PC-9 (cell line): ENCODE measurements at regions of chr11 and their contacts with region 1.

Region 1: DNA sequence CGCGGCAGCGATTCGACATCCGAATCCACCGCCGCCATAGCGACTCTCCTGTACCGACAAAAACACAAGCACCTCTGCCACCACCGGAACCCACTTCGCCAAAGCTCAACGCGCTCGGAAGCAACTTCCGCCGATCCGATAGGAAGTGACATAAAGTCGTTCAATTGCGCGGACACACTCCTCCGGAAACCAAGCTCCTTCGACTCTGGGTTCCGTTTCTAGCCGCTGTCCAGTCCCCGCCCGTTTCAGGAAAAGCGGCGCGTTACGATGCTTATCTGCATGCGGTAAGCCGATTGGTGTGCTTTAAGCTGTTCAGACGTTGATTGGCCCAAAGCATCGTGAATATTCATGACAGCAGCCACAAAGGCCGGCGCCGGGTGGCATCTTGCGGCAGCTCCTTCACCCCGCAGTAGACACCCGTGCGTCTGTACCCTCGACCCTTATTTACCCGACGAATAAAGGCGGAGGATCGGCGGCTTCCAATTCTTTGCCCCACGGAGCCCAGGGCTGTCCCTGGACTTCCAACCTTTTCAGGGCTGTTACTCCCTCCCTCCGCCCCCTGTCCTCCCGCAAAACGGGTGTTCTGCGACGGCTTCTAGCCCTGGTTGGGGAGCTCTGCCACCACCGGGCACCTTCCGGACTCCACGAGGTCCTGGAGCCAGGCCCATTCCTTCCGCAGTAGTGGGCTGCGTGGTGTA is at the start of gene TUT1:
- DNase-seq: peak; percentile 98 to 100
- H3K4me3 ChIP-seq: peak within 1 kb of the TSS; percentile 84
- H3K27ac ChIP-seq: peak within 1 kb of the TSS; percentile 61
- H3K4me1 ChIP-seq: peaks cover 29% of the 10 kb centered on the region
- H3K27me3 ChIP-seq: no peaks in the 10 kb centered on the region
- CTCF ChIP-seq: no peak
- total RNA-seq, gene TUT1: 39.3 and 40.5 TPM in 2 replicates

Region 2: DNA sequence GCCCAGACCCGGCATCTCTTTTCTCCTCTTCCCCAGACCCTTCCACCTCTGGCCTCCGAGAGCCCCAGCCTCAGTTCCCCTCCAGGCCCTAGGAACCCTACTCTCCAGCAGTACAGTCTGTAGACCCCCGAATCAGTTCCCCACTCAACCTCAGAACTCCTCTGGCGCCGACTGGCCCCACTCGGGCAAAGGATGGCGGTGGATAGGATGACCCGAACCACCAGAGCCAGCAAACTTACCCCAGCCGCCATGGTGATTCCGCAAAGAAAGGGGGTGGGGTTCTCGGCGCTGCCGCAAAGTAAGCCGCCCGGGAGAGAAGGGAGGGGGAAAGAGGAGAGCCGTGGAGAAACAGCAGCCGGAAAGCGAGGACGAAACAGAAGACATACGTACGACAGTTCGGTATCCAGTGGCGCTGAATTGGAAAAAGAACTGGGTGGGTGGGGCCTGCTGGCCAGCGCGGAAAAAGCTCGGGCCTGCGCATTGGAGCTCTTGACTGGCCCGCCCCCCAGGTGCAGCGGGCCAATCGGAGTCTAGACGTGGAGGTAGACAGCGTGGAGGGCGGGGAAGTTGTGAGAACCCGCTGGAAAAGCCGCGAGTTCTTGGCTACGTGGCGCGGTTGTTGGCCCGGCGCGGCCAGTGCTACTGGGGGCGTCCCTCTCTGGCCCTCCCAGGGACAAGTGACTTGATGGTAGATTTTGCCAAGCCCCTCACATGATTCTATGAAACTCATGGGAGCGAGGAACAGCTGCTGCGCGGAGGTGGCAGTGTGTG is 17.8 kb before region 1 on chr11 and contains the start of gene EEF1G:
- CTCF ChIA-PET with region 1: interaction called, 9 read pairs
- POLR2A ChIA-PET with region 1: interaction called, 21 read pairs
- intact Hi-C with region 1: no loop called
- DNase-seq: peak; percentile 100
- H3K4me3 ChIP-seq: peak within 1 kb of the TSS; percentile 92
- H3K27ac ChIP-seq: peak within 1 kb of the TSS; percentile 86
- H3K4me1 ChIP-seq: peaks cover 42% of the 10 kb centered on the region
- H3K27me3 ChIP-seq: no peaks in the 10 kb centered on the region
- CTCF ChIP-seq: no peak
- total RNA-seq, gene EEF1G: 1,773 and 2,008 TPM in 2 replicates

Region 3: DNA sequence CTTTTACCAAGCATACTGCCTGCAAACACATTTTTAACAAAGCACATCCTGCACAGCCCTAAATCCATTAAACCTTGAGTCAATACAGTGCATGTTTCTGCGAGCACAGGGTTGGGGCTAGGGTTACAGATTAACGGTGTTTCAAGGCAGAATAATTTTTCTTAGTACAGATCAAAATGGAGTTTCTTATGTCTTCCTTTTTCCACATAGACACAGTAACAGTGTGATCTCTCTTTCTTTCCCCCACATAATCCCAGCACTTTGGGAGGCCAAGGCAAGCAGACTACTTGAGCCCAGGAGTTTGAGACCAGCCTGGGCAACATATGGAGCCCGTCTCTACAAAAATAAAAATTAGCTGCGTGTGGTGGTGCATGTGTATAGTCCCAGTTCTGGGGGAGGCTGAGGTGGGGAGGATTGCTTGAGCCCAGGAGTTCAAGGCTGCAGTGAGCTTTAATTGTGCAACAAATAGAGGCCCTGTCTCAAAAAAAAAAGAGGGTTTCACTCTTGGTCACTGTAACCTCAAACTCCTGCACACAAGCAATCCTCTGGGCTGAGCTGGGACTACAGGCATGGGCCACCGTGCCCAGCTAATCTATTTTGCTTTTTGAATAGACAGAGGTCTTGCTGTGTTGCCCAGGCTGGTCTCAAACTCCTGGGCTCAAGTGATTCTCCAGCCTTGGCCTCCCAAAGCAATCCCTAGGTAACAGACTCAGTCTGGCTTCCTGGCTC is 269.4 kb after region 1 on chr11:
- CTCF ChIA-PET with region 1: interaction called, 8 read pairs
- POLR2A ChIA-PET with region 1: interaction called, 8 read pairs
- intact Hi-C with region 1: loop called (anchors 2 kb)
- DNase-seq: no peak
- H3K4me3 ChIP-seq: no peak overlapping the region
- H3K27ac ChIP-seq: no peak overlapping the region
- H3K4me1 ChIP-seq: peaks cover 9% of the 10 kb centered on the region
- H3K27me3 ChIP-seq: no peaks in the 10 kb centered on the region
- CTCF ChIP-seq: no peak